Left ventricle myocardium superior (tissue), 1 donor: ENCODE measurements at regions of chr15 and their contacts with region 1.

Region 1: GRCh38 chr15:92097474-92098178 is 244.1 kb downstream of the SLCO3A1 start:
- DNase-seq: no peak
- ATAC-seq: peak; percentile 82

Region 2: DNA sequence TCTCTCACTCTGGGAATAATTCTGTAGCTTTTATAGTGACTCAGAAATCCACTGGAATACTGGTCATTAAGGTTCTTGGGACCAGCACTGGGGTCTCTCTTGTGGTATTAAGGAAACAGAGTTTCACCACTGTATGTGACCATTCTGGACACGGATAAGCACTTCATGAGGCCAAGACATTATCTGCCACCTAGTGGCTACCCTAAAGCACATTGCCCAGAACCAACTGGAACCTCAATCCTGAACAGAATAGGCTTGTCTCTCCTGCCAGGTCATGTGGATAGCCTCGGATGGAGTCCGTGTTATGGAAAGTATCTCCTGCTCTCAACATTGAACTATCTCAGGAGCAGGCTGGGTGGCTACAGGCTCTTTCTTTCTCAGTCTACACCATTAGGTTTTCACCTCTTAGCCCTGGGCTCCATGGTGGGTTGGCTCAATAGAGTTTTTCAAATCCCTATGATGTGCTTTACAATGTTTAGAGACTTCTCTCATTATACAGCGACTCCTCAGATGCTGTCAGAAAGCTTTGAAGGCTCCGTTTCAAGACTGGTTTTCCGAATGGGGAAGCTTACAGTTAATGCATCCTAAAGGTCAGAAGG is 128.5 kb after region 1 on chr15:
- intact Hi-C with region 1: loop called (anchors 5 kb)
- DNase-seq: no peak
- ATAC-seq: peak; percentile 85

Region 3: GRCh38 chr15:92457471-92458041 is 359.9 kb after region 1 on chr15:
- intact Hi-C with region 1: no loop called
- DNase-seq: no peak
- ATAC-seq: peak; percentile 86